Activated T-helper 1 cell treated with anti-CD3 and anti-CD28 coated beads, Interleukin-12 subunit alpha, Interleukin-12 subunit beta, Interleukin-2, Interleukin-4 antibody, amounts not matched to agents 30 ng/mL and 10 ng/mL and 1 ng/mL, durations not matched to agents 14 hours and 24 hours and 36 hours (primary cell): ENCODE measurements at regions of chr2 and their contacts with region 1.

Region 1: DNA sequence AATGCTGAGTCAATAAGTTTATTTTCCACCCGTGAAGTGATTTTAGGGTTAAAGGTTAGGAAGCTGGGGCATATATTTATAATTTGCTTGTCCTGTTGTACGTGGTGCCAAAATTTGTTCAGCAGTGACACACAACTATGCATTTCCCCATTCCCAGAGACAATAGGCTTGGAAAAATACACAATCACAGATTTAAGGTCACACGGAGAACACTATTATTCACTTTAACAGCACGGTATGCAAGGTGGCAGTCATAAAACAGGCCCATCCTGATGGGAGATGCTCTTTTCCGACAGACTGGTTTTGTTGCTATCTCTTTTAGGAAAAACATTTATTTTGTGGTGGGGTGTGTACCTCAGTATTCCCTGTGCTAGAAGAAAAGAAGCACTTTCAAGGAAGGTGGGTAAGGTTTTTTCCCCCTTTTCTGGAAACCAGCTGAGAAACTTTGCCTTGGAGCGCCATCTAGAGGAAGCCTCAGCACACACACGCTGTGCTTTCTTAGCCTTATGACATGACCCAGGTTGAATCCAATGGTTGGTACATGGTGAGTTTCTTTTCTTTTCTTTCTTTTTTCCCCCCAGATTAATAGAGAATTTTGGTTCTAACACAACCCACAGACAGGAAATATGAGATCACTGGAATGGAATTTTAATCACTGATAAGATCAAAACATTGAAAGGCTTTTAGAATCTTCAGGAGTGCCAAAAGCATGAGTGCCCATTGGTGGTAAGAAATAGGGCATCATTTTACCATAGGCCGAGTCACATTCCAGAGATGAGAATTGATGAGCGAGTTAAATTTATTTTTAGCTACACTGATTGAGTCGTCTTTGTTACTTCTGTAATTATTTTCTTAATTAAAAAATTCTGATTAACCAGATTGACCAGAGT is 332.1 kb downstream of the AGPS start:
- DNase-seq: peak; percentile 16
- H3K4me3 Mint-ChIP-seq: no peak overlapping the region
- H3K27ac Mint-ChIP-seq: no peak overlapping the region
- H3K4me1 Mint-ChIP-seq: no peaks in the 10 kb centered on the region
- H3K27me3 Mint-ChIP-seq: peaks cover 24% of the 10 kb centered on the region

Region 2: DNA sequence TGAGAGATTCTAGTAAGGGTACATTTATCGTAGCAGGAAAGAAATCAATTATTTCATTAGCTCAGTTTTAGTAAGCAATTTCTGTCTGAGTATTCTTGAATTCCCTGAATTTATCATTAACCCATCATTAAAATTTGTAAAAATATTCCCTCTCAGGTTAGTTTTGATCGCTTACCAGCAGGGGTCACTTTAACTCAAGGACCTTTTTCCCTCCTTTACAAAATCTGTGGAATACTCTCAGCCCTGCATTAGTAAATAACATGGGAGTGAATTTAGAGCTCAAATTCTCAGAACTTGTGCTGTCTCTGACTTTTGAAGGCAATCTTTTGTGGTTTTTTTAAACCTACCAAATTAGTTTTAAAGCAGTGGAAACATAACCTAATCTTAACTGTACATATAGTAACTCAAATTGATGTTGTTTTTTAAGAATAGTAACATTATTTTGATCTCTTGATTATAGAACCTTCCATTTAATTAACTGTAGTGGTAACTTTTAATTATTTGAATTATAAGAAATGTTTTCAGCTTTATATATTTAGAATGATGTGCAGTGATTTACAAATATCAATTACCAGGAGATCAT is 234.8 kb before region 1 on chr2:
- intact Hi-C with region 1: loop called (anchors 1 kb)
- DNase-seq: no peak
- H3K4me3 Mint-ChIP-seq: no peak overlapping the region
- H3K27ac Mint-ChIP-seq: no peak overlapping the region
- H3K4me1 Mint-ChIP-seq: no peaks in the 10 kb centered on the region
- H3K27me3 Mint-ChIP-seq: no peaks in the 10 kb centered on the region

Region 3: DNA sequence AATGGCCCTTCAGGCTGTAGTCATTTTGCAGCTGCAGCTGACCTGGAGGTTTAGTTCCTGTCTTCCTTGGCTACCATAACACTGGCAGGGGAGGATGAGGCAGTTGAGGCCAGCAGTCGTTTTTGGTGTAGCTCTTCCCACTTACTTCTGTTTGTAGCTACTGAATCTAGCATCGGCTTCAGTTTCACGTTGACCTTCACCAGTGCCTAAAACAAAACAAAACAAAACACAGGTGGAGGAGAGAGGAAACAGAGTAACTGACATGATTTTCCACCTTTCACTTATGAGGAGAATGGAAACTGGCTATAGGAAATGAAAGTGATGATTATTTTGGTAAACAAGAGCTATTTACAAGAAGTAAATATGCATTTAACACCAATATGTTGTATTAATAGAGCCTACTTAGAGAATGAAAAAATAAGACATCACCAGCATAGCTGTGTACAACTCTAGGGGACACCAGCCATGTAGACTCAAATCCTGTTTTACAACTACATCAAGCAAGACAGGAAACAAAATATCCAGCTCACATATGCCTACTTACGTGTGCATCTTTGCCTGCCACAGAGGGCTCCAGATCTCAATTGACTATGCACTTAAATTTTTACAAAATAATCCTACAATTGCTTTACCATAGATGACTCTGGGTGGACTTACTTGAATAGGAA is 95.2 kb before region 1 on chr2:
- intact Hi-C with region 1: no loop called
- DNase-seq: no peak
- H3K4me3 Mint-ChIP-seq: no peak overlapping the region
- H3K27ac Mint-ChIP-seq: no peak overlapping the region
- H3K4me1 Mint-ChIP-seq: no peaks in the 10 kb centered on the region
- H3K27me3 Mint-ChIP-seq: peaks cover 3% of the 10 kb centered on the region

Region 4: GRCh38 chr2:177679611-177680605 is 44.7 kb before region 1 on chr2:
- intact Hi-C with region 1: no loop called
- DNase-seq: no peak
- H3K4me3 Mint-ChIP-seq: no peak overlapping the region
- H3K27ac Mint-ChIP-seq: no peak overlapping the region
- H3K4me1 Mint-ChIP-seq: no peaks in the 10 kb centered on the region
- H3K27me3 Mint-ChIP-seq: peaks cover 11% of the 10 kb centered on the region

Region 5: GRCh38 chr2:178043266-178043665 is 318.6 kb after region 1 on chr2:
- intact Hi-C with region 1: no loop called
- DNase-seq: no peak
- H3K4me3 Mint-ChIP-seq: no peak overlapping the region
- H3K27ac Mint-ChIP-seq: no peak overlapping the region
- H3K4me1 Mint-ChIP-seq: no peaks in the 10 kb centered on the region
- H3K27me3 Mint-ChIP-seq: peaks cover 2% of the 10 kb centered on the region